ENCODE measurements at regions of chr3 and their contacts with region 1.

Region 1: DNA sequence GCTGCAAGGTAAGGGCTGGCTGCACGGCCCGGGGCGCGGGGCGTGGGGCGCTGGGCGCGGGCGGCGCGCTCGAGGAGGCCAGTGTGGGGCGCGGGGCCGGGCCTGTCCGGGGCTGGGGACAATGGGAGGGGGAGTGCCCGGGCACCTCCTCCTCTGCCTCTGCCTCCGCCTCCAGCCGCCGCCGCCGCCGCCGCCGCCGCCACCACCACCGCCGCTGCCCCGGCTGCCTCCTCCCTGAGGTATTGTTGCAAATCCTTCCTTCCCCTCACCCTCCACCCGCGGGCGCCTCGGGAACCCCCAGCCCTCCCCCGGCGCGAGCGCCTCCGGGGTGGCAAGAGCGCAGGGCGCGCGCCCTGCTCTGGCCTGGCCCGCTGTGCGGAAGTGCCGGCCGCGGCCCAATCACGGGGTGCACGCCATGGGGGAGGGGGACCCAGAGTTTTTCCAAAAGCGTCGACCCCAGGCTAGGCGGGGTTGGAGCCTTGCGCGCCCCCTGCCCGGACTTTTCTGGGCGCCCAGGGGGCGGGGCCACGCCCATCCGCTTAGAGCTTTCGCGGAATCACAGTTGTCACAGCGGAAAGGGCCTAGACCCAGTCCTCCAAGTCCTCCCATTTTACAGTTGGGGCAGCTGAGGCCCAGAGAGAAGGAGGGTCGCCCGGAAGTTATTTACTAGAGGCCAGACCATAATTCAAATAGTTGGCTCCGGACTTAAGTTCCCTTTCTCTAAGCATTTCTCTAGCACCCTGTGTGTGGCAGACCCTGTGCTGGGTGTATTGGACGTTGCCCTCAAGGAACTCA is at the start of gene LPP:
- DNase-seq: peak; percentile 44 to 93 (median 60)

Region 2: GRCh38 chr3:187745201-187746058 is 408.8 kb before region 1 on chr3 and contains the start of gene BCL6:
- intact Hi-C with region 1: loop called (anchors 5 kb)
- DNase-seq: peak; percentile 86 to 98 (median 88)

Region 3: DNA sequence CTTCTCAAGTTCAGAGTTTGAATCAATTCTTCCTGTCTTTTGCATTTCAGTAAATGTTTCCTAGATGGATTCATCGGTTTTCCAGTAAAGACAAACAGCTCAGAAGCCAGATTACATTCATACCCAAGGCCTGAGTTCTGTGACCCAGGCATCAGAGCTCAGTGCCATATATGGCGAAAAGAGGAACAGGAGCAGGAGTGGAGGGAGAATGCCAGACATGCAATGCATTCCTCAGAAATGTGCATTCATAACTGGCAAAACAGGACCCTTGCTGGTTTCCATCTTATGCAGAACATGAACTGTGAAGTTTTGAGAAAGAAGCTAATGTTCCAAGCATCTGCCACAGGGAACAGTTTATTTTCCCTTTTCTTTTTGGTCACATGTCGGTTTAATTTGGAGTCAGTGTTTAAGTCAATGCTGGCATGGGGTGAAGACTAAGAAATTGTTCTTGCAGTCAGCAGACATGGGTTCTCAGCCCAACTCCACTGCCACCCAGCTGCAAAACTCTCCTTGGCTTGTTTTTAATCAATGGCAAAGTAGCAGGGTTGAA is 116.3 kb after region 1 on chr3:
- intact Hi-C with region 1: loop called (anchors 5 kb)
- DNase-seq: no peak

Measured in posterior cingulate gyrus (tissue), 11 donors.